Vagina (tissue), 2 donors: ENCODE measurements at regions of chr6 and their contacts with region 1.

Region 1: GRCh38 chr6:14066782-14067406 is 50.7 kb upstream of the CD83 start:
- DNase-seq: no peak
- H3K4me3 ChIP-seq: no peak overlapping the region
- H3K27ac ChIP-seq: no peak overlapping the region
- H3K4me1 ChIP-seq: no peaks in the 10 kb centered on the region
- H3K27me3 ChIP-seq: no peaks in the 10 kb centered on the region
- CTCF ChIP-seq: peak; percentile 59 to 70 (median 69)
- POLR2A ChIP-seq: no peak

Region 2: DNA sequence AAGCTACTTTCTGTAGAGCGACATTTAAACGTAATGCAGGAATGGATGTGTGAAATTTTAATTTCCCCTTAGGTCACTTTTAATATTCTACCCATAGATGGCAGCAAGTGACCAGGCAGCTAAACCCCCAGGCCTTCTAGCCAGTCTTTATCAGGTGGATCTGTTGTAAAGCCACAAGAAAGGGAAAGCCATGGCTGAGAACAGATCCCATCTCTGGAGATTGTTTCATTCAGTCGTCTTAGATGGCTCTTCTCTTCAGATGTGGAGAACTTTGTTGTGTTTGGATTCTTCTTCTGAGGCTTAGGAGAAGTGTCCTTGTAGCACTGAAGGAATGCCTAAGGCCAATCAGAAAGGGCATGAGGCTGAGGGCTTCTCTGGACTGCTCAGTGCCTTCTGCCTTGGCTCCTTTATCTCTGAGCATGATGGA is 157.9 kb before region 1 on chr6:
- intact Hi-C with region 1: loop called (anchors 10 kb)
- DNase-seq: no peak
- H3K4me3 ChIP-seq: no peak overlapping the region
- H3K27ac ChIP-seq: no peak overlapping the region
- H3K4me1 ChIP-seq: no peaks in the 10 kb centered on the region
- H3K27me3 ChIP-seq: no peaks in the 10 kb centered on the region
- CTCF ChIP-seq: peak; percentile 42 to 82 (median 79)
- POLR2A ChIP-seq: no peak